Cardiac septum (tissue), 1 donor: ENCODE measurements at regions of chr14 and their contacts with region 1.

Region 1: DNA sequence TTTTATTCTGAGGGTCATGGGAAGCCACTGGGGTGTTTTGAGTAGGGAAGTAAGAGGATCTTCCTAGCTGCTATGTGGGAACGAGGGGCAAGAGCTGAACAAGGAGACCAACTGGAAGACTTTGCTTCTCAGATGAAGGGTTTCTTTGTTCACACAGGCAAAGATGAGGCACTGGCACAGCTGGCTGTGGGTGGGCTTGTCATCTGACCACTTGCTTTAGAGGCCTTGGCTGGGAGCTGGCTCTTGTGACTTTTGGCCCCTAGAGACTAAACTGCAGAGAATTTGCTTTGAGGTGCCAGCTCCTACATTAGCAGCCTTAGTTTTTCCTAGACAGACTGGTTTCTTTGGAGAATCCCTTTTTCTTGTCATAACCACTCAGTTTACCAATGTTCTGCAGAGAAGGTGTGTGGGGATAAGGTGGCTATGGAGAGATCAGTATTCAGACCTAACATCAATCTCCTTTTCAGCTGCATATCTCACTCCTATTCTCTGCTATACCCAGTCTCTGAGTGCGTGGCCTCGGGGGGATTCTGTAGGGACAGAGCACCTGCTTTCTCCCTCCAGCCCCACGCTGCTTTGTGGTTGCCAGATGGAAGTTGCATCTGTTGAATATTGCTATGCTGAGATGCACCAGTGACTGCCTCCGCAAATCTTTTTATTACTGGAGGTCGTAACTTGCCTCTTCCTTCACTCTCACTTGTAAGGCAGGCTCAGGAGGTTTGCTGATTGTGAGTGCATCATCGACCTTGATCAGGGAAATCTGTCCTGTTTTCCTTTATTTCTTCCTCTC is 12.7 kb downstream of the PPP2R5C start:
- DNase-seq: no peak

Region 2: DNA sequence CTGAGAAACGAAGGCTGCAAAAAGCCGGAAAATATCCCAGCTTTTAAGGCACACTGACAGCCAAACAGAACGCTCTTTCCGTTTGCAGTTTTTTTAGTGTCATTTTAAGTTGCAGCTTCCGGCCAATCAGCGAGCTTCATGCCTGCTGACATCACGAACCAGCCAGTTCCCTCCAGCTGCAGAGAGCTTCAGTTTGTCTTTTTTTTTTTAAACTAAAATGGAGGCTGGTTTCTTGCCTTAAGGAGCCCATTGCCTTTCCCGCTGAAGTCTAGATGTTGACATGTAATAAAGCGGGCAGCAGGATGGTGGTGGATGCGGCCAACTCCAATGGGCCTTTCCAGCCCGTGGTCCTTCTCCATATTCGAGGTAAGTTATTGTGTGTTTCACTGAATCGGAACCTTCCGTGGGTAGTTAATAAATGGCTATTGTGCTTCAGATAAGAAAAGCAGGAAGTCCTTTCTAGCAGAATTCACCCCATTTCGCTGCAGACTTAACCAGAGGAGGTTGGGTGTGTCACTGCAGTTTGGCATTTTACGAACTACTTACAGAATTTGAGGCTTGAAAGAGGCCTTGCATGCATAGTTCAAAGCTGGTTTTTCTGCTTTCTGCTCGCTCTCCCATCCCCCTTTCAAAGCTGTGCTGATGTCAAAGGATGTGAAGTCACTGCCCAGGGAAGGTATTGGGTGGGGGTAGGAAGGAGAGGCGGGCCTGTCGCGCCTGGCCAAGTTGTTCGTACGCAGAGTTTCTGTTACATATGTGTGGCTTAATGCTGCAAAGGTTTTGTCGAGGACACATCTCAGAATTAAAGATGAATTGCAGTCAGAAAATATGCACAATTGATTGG is 35.7 kb after region 1 on chr14:
- intact Hi-C with region 1: loop called (anchors 5 kb)
- DNase-seq: peak; percentile 92

Region 3: GRCh38 chr14:101823511-101824120 is 49.4 kb after region 1 on chr14:
- intact Hi-C with region 1: no loop called
- DNase-seq: no peak

Region 4: DNA sequence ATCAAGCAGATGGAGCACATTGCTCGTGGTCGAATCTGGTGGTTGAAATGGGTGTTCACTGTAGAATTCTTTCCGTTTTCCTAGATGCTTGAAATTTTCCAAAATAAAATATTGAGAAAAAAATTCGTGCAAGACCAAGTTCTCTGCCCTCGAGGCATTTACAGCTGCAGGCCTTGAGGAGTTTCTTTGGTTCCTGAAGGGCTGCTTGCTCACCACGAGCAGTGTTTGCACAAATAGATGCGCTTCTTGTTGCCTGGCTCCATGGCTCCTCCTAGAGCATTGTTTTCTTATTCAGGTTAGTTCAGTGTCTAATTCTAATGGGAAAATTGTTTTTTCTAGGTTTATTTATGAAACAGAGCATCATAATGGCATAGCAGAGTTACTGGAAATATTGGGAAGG is 115.7 kb after region 1 on chr14:
- intact Hi-C with region 1: loop called (anchors 10 kb)
- DNase-seq: no peak

Region 5: GRCh38 chr14:101947906-101948665 is 173.9 kb after region 1 on chr14:
- intact Hi-C with region 1: loop called (anchors 5 kb)
- DNase-seq: peak; percentile 100